ENCODE measurements at regions of chr2 and their contacts with region 1.

Region 1: DNA sequence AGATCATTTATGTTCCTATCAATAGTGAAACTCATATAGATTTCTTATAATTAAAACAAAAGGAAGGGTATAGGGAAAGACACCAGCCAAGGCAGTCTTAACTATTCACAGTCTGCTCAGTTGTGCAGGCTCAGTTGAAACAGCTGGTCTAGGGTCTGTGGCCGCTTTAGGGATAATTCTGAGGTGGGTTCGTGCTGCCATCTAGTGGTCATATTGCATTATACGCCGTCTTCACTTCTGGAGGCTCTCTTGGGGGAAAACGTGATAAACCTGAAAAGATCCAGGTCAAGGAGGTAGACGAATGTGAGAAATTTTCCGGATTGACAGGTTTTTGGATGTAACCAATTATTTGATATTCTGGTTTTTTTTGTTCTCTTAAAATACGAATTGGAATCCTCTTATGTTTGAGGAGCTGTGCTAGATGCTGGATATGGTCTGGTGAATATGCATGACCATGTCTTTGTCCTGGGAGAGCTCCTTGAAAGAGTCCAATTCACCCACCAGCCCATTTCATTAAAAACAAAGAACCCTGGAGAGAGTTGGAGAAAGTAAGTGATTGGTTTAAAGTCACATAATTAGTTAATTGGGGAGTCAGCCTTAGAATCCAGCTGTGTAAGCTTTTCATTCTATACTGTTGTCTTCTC is 492.4 kb downstream of the PLCL1 start:
- DNase-seq: peak; percentile 73
- H3K4me3 ChIP-seq: no peak overlapping the region
- H3K27ac ChIP-seq: no peak overlapping the region
- H3K4me1 ChIP-seq: no peaks in the 10 kb centered on the region
- H3K27me3 ChIP-seq: no peaks in the 10 kb centered on the region; the same call in 1 of the 2 replicates
- CTCF ChIP-seq: peak; percentile 78
- EP300 ChIP-seq: no peak
- RAD21 ChIP-seq: peak; percentile 96

Region 2: DNA sequence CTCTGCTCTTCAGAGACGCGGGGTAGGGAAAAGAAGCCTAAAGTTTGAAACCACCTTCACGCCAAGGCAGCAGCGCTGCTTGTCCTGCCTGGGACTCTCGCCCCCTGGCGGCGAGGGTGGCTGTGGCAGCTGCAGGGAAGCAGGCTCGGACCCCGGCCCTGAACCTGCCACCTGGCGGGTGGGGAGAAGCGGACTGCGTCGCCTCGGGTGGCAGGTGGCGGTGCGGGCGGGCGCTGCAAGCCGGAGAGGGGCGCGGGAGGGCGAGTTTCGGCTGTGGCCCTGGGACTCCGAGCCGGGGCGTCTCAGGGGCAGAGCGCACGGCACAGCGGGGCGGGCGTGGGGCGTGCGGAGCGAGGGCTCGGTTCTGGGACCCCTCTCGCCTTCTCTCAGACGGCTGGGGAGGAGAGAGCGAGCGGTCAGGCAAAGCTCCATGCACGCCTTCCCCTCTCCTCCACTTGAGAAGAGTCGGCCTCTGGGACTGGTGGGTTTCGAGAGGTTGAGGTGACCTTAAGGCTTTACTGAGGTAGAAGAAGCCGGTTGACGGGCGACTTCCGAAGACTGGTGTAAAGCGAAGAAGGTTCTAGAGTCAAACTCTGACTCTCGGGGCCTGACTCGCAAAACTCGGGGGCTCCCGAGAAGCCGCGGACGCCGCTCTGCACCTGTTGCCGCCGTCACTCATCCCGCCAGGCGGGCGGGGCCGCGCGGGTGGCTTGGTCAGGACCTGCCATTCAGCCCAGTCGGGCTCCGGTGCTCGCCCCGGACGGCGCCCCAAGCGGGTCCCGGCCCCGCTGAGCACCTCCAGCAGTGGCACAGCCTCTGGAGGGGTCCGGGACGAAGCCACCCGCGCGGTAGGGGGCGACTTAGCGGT is 510.5 kb before region 1 on chr2:
- CTCF ChIA-PET with region 1: interaction called, 12 read pairs
- POLR2A ChIA-PET with region 1: no interaction called
- DNase-seq: peak; percentile 81
- H3K4me3 ChIP-seq: peak overlapping the region; percentile 43 to 46
- H3K27ac ChIP-seq: no peak overlapping the region
- H3K4me1 ChIP-seq: peaks cover 0 to 3% of the 10 kb centered on the region in 2 experiments; a peak in 1 of 4 replicates
- H3K27me3 ChIP-seq: no peaks in the 10 kb centered on the region
- CTCF ChIP-seq: peak; percentile 55
- EP300 ChIP-seq: no peak
- RAD21 ChIP-seq: no peak

Region 3: DNA sequence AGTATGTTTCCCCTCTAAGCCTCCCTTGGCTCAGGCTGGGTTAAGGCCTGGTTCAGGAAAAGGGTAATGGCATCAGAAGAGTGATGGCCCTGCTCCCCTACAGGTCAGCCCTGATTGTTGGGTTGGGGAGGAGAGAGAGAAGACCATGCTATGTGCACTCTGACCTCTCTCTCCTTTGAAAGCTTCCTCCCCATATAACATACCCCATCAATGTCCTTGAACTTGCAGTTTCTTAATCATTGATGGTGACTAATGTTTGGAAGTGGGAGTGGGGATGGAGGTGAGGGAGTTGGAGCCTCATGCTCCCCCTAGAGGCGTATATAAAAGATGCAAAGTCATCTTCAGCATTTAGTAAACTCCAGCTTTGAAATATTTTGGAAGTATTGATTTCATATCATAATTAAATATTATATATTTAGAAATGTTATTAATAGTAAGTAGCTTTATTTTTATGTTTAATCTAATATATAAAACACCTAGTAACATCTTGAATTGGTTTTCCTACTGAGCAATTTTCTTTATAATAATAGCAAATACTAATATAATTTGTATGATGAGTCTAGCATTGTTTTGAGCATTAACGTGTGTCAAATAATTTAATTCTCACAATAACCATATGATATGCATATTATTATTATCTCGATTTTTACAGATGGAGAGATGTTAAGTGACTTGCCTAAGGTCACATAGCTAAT is 483.5 kb before region 1 on chr2:
- CTCF ChIA-PET with region 1: interaction called, 45 read pairs
- POLR2A ChIA-PET with region 1: no interaction called
- DNase-seq: peak; percentile 36
- H3K4me3 ChIP-seq: no peak overlapping the region
- H3K27ac ChIP-seq: no peak overlapping the region
- H3K4me1 ChIP-seq: no peaks in the 10 kb centered on the region
- H3K27me3 ChIP-seq: no peaks in the 10 kb centered on the region
- CTCF ChIP-seq: peak; percentile 65
- EP300 ChIP-seq: no peak
- RAD21 ChIP-seq: peak; percentile 35; the same call in 1 of the 2 replicates

Region 4: DNA sequence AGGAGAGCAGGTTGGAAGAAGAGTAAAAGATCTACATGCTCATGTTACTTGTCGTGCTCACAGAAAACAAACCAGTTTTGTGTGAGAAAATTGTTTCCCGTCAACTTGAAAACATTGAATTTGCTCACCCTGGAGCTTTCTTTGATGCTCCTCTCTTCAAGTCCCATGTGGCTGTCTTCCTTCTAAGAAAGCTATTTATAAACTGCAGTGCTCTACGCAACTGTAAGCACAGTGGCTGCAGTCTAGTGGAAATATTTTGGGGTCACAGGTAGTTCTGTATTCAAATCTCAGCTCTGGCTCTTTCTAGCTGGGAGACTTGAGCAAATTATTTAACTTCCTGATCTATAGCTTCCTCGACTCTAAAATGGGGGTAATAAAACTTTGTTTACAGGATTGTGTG is 280.5 kb before region 1 on chr2:
- CTCF ChIA-PET with region 1: no interaction called
- POLR2A ChIA-PET with region 1: no interaction called
- DNase-seq: no peak
- H3K4me3 ChIP-seq: no peak overlapping the region
- H3K27ac ChIP-seq: no peak overlapping the region
- H3K4me1 ChIP-seq: no peaks in the 10 kb centered on the region
- H3K27me3 ChIP-seq: no peaks in the 10 kb centered on the region
- CTCF ChIP-seq: no peak
- EP300 ChIP-seq: no peak
- RAD21 ChIP-seq: no peak

Region 5: DNA sequence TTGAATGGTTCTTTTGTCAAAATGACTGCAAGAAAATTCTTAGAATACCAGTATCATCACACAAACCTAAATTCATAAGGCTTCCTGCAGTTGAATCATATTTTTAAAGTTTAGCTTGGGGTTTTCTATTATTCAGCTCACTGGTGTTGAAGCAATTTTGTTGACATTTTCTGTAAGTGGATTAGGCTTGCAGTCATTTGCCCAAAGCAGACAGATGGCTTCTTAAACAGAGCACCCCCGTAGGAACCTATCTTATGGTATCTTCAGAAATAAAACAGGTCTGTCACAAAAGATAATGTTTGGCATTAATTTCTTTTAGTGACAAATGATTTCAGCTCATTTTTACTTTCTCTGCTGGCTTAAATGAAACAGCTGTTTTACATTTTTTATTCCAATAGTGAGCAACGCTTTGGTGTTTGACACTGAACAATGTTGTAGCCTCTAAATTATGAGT is 161.3 kb before region 1 on chr2:
- CTCF ChIA-PET with region 1: interaction called, 15 read pairs
- POLR2A ChIA-PET with region 1: no interaction called
- DNase-seq: peak; percentile 41
- H3K4me3 ChIP-seq: no peak overlapping the region
- H3K27ac ChIP-seq: peak overlapping the region; percentile 21 to 87
- H3K4me1 ChIP-seq: peaks cover 8 to 15% of the 10 kb centered on the region in 2 experiments; a peak in 2 of 4 replicates
- H3K27me3 ChIP-seq: no peaks in the 10 kb centered on the region
- CTCF ChIP-seq: no peak
- EP300 ChIP-seq: peak; percentile 54 to 98; a peak in 3 of 4 replicates
- RAD21 ChIP-seq: peak; percentile 39

Region 6: DNA sequence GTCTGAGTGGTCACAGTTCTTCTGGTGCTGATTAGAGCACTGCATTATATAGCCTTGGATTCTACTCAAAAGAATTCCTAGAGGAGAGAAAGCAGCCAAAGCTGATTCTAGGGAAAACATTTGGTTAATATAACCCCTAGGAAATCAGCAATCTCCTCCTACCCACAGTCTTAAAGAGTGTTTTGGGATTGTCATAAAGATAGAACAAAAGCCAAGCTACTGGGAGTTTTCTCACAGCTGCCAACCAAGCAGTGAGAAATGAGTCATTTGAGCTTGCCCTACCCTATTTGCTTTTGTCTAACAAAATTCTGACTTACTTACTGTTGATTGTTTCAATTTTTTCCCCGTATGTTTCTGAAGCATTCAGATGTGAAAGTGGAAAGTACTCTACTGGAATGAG is 23.1 kb before region 1 on chr2:
- CTCF ChIA-PET with region 1: interaction called, 13 read pairs
- POLR2A ChIA-PET with region 1: no interaction called
- DNase-seq: no peak
- H3K4me3 ChIP-seq: no peak overlapping the region
- H3K27ac ChIP-seq: no peak overlapping the region
- H3K4me1 ChIP-seq: no peaks in the 10 kb centered on the region
- H3K27me3 ChIP-seq: no peaks in the 10 kb centered on the region
- CTCF ChIP-seq: no peak
- EP300 ChIP-seq: no peak
- RAD21 ChIP-seq: no peak

Measured in SK-N-SH (cell line).